Activated T-helper 2 cell treated with anti-CD3 and anti-CD28 coated beads, Interferon-gamma antibody, Interleukin-2, Interleukin-4, amounts not matched to agents 10 μg/mL and 5 μg/mL and 100 μg/mL, durations not matched to agents 14 hours and 24 hours and 36 hours (primary cell): ENCODE measurements at regions of chr6 and their contacts with region 1.

Region 1: GRCh38 chr6:81752138-81752920 is at the start of gene TENT5A:
- DNase-seq: peak; percentile 82
- H3K4me3 Mint-ChIP-seq: peak within 1 kb of the TSS; percentile 82
- H3K27ac Mint-ChIP-seq: peak within 1 kb of the TSS; percentile 34
- H3K4me1 Mint-ChIP-seq: peaks cover 21% of the 10 kb centered on the region
- H3K27me3 Mint-ChIP-seq: peaks cover 56% of the 10 kb centered on the region
- total RNA-seq, gene TENT5A: 0.50 and 0.53 TPM in 2 replicates

Region 2: GRCh38 chr6:80163658-80164187 is 1588.6 kb before region 1 on chr6:
- intact Hi-C with region 1: loop called (anchors 10 kb)
- DNase-seq: no peak
- H3K4me3 Mint-ChIP-seq: no peak overlapping the region
- H3K27ac Mint-ChIP-seq: no peak overlapping the region
- H3K4me1 Mint-ChIP-seq: peaks cover 7% of the 10 kb centered on the region
- H3K27me3 Mint-ChIP-seq: no peaks in the 10 kb centered on the region

Region 3: GRCh38 chr6:80477591-80477990 is 1274.7 kb before region 1 on chr6:
- intact Hi-C with region 1: loop called (anchors 10 kb)
- DNase-seq: no peak
- H3K4me3 Mint-ChIP-seq: no peak overlapping the region
- H3K27ac Mint-ChIP-seq: no peak overlapping the region
- H3K4me1 Mint-ChIP-seq: no peaks in the 10 kb centered on the region
- H3K27me3 Mint-ChIP-seq: no peaks in the 10 kb centered on the region

Region 4: DNA sequence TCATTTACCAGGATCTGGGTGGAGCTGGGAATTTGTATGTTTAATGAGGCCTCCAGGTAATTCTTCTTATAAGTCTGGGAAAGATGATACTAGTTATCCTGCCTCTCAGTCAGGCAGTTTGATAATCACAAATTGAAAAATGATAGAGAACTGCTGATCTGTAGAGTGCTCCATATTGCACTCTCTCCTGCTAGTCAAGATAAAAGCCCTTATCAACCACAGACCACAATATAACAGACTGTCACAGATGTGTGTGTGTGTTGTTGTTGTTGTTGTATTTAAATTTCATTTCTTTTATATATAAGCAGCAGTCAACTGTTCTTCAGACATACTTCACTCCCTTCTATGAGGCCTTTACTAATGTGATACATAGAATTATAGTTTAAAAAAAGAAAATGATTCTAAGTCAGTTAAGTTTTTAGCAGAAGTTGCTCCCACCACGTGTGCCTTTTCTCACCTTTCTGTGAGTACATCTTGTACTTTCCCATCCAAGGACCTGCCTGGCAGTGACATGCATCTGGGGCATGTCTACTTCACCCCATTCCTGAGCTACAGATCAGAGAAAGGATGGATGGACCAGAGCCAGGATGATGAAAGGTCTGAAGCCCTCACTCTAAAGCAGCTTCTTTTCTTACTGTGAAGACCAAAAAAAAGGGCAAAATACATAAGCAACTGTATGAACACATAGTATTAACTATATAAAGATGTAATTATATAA is 29.7 kb before region 1 on chr6:
- intact Hi-C with region 1: no loop called
- DNase-seq: no peak
- H3K4me3 Mint-ChIP-seq: no peak overlapping the region
- H3K27ac Mint-ChIP-seq: no peak overlapping the region
- H3K4me1 Mint-ChIP-seq: no peaks in the 10 kb centered on the region
- H3K27me3 Mint-ChIP-seq: no peaks in the 10 kb centered on the region

Region 5: DNA sequence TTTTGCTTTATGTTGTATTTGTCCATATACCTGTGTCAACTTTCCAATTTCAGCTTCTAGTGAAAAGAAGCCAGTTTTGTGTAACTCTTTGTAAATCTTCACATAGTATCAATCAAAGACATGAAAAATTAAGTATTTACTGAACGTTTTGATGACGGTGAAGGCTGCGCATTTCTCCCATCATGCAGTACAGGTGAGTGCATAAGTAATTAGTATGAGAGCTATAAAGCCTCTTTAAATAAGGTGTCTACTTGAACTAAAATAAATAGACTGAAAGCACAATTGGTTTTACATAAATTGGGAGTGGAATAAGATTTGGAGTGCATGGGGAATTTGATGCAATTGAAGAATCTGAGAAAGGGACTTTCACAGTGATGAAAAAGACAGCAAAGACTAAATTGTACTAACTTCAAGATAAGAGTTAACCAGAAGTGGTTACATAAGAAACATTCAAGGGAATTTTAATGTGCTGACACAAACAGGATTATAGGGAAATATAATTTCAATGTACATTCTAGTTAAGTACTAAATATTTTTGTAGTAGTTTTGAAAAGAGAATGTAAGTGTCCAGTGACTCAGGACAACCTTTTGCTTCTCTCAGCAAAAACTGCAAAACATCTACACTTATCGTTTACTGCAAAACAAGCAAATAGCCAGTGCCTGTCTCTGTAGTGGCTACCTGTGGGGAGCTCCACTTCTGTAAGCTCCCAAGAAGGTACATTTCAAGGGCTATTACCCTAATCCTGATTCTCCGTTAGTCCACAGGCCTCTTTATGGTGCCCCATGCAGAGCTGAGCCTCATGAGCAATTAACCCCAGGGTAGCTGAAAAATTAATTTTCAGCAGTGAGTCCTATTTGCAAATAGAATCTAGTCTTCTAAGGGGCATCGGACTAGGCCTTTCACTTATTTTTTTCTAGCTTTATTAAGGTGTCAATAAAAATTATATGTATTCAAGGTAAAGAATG is 12.8 kb before region 1 on chr6:
- intact Hi-C with region 1: no loop called
- DNase-seq: no peak
- H3K4me3 Mint-ChIP-seq: no peak overlapping the region
- H3K27ac Mint-ChIP-seq: no peak overlapping the region
- H3K4me1 Mint-ChIP-seq: no peaks in the 10 kb centered on the region
- H3K27me3 Mint-ChIP-seq: no peaks in the 10 kb centered on the region

Region 6: GRCh38 chr6:81772741-81773140 is 20.4 kb after region 1 on chr6:
- intact Hi-C with region 1: loop called (anchors 2 kb)
- DNase-seq: no peak
- H3K4me3 Mint-ChIP-seq: no peak overlapping the region
- H3K27ac Mint-ChIP-seq: no peak overlapping the region
- H3K4me1 Mint-ChIP-seq: peaks cover 14% of the 10 kb centered on the region
- H3K27me3 Mint-ChIP-seq: peaks cover 9% of the 10 kb centered on the region

Region 7: DNA sequence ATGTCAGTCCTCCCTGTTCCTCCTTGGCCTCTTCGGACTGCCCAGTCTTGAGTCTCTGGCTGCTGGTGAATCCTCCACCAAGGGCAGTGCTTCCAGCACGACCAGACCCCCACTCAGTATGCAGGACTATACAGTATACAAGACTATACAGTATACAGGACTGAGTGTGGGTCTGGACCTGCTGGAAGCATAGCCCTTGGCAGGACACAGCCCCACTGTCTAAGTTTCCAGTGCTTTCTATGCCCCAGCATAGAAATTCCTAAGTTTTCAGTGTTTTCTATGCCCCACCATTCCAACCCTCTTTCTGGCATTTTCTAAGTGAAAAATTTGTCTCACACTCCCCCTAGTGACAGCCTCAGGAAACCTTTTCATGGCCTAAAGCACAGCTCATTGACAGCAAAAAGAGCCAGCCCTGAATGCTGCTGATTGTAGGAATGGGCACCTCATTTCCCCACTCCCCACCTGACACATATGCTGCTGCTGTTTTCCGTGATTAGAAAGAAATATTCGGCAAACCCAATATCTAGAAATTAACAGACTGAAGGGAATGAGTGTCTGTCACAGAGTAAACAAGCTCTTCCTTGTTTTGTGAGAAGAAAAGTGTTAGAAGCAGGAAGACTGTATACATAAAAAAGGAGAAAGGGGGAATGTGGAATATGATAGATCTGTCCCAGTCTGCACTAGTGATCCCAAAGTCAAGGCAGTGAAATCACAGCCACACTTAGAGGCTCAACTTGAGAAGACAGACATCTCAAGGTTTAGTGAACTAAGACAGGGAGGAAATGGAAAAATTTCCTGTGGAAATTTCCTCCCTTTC is 288.3 kb after region 1 on chr6:
- intact Hi-C with region 1: no loop called
- DNase-seq: no peak
- H3K4me3 Mint-ChIP-seq: no peak overlapping the region
- H3K27ac Mint-ChIP-seq: no peak overlapping the region
- H3K4me1 Mint-ChIP-seq: no peaks in the 10 kb centered on the region
- H3K27me3 Mint-ChIP-seq: no peaks in the 10 kb centered on the region

Region 8: GRCh38 chr6:82247634-82248232 is 495.4 kb after region 1 on chr6 and contains the start of gene IBTK:
- intact Hi-C with region 1: loop called (anchors 5 kb)
- DNase-seq: peak; percentile 88
- H3K4me3 Mint-ChIP-seq: peak within 1 kb of the TSS; percentile 91
- H3K27ac Mint-ChIP-seq: peak within 1 kb of the TSS; percentile 93
- H3K4me1 Mint-ChIP-seq: peaks cover 31% of the 10 kb centered on the region
- H3K27me3 Mint-ChIP-seq: no peaks in the 10 kb centered on the region
- total RNA-seq, gene IBTK: 40.5 and 42.5 TPM in 2 replicates